Naive thymus-derived CD4-positive, alpha-beta T cell (primary cell): ENCODE measurements at regions of chr16 and their contacts with region 1.

Region 1: DNA sequence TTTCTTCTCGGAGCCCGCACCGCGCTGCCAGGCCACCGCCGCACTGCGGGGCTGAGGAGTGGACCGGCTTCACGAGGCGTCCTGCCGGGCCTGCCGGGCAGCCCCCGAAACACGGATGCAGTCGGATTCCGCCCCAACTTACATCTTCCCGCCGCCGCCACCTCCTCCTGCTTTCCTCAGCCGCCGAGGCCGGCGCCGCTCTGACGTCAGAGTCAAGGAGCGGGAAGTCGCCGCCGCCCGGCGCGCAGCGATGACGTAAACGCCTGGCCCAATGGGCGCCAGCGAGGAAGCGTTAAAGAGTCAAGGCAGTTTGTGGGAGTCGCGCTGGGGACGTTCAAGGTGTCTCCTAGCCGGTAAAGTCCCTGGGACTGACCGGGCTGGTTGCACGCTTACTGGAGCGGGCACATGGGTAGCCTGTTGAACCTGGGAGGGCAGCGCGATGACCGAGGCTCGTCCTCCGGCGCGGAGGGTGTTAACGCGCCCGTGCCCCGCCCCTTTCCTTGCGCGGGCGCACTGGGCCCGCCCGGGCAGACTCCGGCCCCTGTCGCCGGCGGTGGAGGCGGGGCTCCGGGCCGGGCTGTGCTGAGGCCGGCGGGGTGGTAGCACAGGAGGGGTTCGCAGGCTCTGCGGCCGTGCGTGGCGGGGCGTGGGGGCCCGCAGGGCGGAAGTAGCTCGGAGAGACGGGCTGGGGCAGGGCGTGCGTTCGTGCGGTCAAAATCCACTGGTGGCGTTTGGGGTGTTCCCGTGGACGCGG is at the start of gene RNPS1:
- DNase-seq: peak; percentile 93 to 98 (median 96)
- ATAC-seq: peak; percentile 92
- H3K4me3 ChIP-seq: peak within 1 kb of the TSS; percentile 99
- H3K4me3 Mint-ChIP-seq: peak within 1 kb of the TSS; percentile 93 to 98 (median 95)
- H3K27ac ChIP-seq: peak within 1 kb of the TSS; percentile 91
- H3K27ac Mint-ChIP-seq: peak within 1 kb of the TSS; percentile 95 to 99 (median 98)
- H3K4me1 ChIP-seq: peaks cover 13 to 15% of the 10 kb centered on the region in 2 donors
- H3K4me1 Mint-ChIP-seq: peaks cover 15 to 42% (median 35%) of the 10 kb centered on the region in 7 donors
- H3K27me3 ChIP-seq: no peaks in the 10 kb centered on the region
- H3K27me3 Mint-ChIP-seq: peaks cover 0 to 2% (median 0%) of the 10 kb centered on the region in 5 donors
- total RNA-seq, gene RNPS1: 136 to 250 (median 220) TPM

Region 2: GRCh38 chr16:1208239-1208830 is 1059.8 kb before region 1 on chr16:
- CTCF ChIA-PET with region 1: no interaction called
- POLR2A ChIA-PET with region 1: no interaction called
- intact Hi-C with region 1: no loop called
- DNase-seq: peak in 5 of 9 donors; percentile 8 to 25 (median 14)
- ATAC-seq: peak; percentile 54
- H3K4me3 ChIP-seq: no peak overlapping the region
- H3K4me3 Mint-ChIP-seq: peak overlapping the region in 9 of 10 donors; percentile 47 to 76 (median 69)
- H3K27ac ChIP-seq: no peak overlapping the region
- H3K27ac Mint-ChIP-seq: peak overlapping the region in 8 of 9 donors; percentile 60 to 87 (median 74)
- H3K4me1 ChIP-seq: no peaks in the 10 kb centered on the region
- H3K4me1 Mint-ChIP-seq: peaks cover 0 to 5% (median 4%) of the 10 kb centered on the region in 7 donors
- H3K27me3 ChIP-seq: no peaks in the 10 kb centered on the region
- H3K27me3 Mint-ChIP-seq: no peaks in the 10 kb centered on the region

Region 3: GRCh38 chr16:2047330-2048115 is 220.6 kb before region 1 on chr16 and contains the starts of genes NTHL1 and TSC2:
- CTCF ChIA-PET with region 1: no interaction called
- POLR2A ChIA-PET with region 1: interaction called, 3 read pairs
- intact Hi-C with region 1: loop called in 1 of 2 experiments (anchors 5 kb)
- DNase-seq: peak; percentile 81 to 95 (median 87)
- ATAC-seq: peak; percentile 98
- H3K4me3 ChIP-seq: peak within 1 kb of the TSS; percentile 72
- H3K4me3 Mint-ChIP-seq: peak within 1 kb of the TSS; percentile 82 to 97 (median 93)
- H3K27ac ChIP-seq: peak within 1 kb of the TSS; percentile 82
- H3K27ac Mint-ChIP-seq: peak within 1 kb of the TSS in 8 of 9 donors; percentile 57 to 91 (median 82)
- H3K4me1 ChIP-seq: peaks cover 6 to 12% of the 10 kb centered on the region in 2 donors
- H3K4me1 Mint-ChIP-seq: peaks cover 16 to 23% (median 19%) of the 10 kb centered on the region in 7 donors
- H3K27me3 ChIP-seq: no peaks in the 10 kb centered on the region
- H3K27me3 Mint-ChIP-seq: no peaks in the 10 kb centered on the region
- total RNA-seq, gene NTHL1: 4.4 to 27.0 (median 7.5) TPM
- total RNA-seq, gene TSC2: 126 to 155 (median 147) TPM

Region 4: DNA sequence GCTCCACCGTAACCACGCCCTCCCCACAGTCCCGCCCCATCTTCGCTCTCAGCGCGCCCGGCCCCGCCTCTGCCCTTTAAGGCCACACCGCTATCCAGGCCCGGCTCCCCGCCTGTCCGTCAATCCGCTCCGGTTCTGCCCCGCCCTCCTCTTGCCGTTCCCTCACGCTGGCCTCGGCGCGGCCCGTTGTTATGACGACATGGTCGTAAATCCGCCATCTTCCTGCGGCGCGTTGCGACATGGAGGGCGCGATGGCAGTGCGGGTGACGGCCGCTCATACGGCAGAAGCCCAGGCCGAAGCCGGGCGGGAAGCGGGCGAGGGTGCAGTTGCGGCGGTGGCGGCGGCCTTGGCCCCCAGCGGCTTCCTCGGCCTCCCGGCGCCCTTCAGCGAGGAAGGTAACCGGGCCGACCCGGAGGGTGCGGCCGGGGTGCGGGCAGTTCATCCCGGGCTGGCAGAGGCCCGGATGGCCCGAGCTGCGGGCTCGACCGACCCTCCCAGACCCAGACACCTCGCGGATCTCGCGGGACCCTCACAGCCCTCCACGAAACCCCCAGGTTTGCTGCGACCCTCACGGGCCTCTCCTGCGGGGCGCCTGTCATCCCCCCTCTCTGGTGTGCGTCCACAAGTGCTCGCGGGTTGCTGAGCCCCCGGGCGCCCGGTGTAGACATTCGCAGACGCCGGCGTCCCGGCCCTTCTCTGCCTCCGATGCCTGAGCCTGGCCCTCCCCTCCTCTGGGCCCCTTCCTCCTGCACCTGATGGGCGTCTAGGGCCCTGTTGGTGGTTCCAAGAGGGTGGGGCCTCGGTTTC is 44.5 kb before region 1 on chr16 and contains the start of gene E4F1:
- CTCF ChIA-PET with region 1: no interaction called
- POLR2A ChIA-PET with region 1: no interaction called
- intact Hi-C with region 1: loop called (anchors 1 kb)
- DNase-seq: peak; percentile 91 to 99 (median 97)
- ATAC-seq: peak; percentile 99
- H3K4me3 ChIP-seq: peak within 1 kb of the TSS; percentile 81
- H3K4me3 Mint-ChIP-seq: peak within 1 kb of the TSS; percentile 79 to 91 (median 88)
- H3K27ac ChIP-seq: peak within 1 kb of the TSS; percentile 81
- H3K27ac Mint-ChIP-seq: peak within 1 kb of the TSS; percentile 45 to 92 (median 86)
- H3K4me1 ChIP-seq: peaks cover 7 to 9% of the 10 kb centered on the region in 2 donors
- H3K4me1 Mint-ChIP-seq: peaks cover 0 to 25% (median 19%) of the 10 kb centered on the region in 7 donors
- H3K27me3 ChIP-seq: no peaks in the 10 kb centered on the region
- H3K27me3 Mint-ChIP-seq: peaks cover 0 to 3% (median 0%) of the 10 kb centered on the region in 5 donors
- total RNA-seq, gene E4F1: 31.3 to 45.6 (median 36.8) TPM

Region 5: GRCh38 chr16:2429034-2429770 is 161.1 kb after region 1 on chr16 and contains the start of gene CCNF:
- CTCF ChIA-PET with region 1: no interaction called
- POLR2A ChIA-PET with region 1: no interaction called
- intact Hi-C with region 1: loop called (anchors 1 to 5 kb)
- DNase-seq: peak; percentile 87 to 98 (median 92)
- ATAC-seq: peak; percentile 99
- H3K4me3 ChIP-seq: peak within 1 kb of the TSS; percentile 83
- H3K4me3 Mint-ChIP-seq: peak within 1 kb of the TSS; percentile 81 to 97 (median 88)
- H3K27ac ChIP-seq: peak within 1 kb of the TSS; percentile 68
- H3K27ac Mint-ChIP-seq: peak within 1 kb of the TSS; percentile 11 to 88 (median 71)
- H3K4me1 ChIP-seq: peaks cover 5 to 10% of the 10 kb centered on the region in 2 donors
- H3K4me1 Mint-ChIP-seq: peaks cover 12 to 38% (median 19%) of the 10 kb centered on the region in 7 donors
- H3K27me3 ChIP-seq: no peaks in the 10 kb centered on the region
- H3K27me3 Mint-ChIP-seq: no peaks in the 10 kb centered on the region
- total RNA-seq, gene CCNF: 2.6 to 50.1 (median 3.4) TPM

Region 6: GRCh38 chr16:2500918-2501750 is 233.0 kb after region 1 on chr16:
- CTCF ChIA-PET with region 1: no interaction called
- POLR2A ChIA-PET with region 1: no interaction called
- intact Hi-C with region 1: loop called in 1 of 2 experiments (anchors 1 kb)
- DNase-seq: peak; percentile 64 to 85 (median 74)
- ATAC-seq: peak; percentile 97
- H3K4me3 ChIP-seq: no peak overlapping the region
- H3K4me3 Mint-ChIP-seq: no peak overlapping the region
- H3K27ac ChIP-seq: no peak overlapping the region
- H3K27ac Mint-ChIP-seq: no peak overlapping the region
- H3K4me1 ChIP-seq: no peaks in the 10 kb centered on the region
- H3K4me1 Mint-ChIP-seq: peaks cover 0 to 3% (median 0%) of the 10 kb centered on the region in 7 donors
- H3K27me3 ChIP-seq: no peaks in the 10 kb centered on the region
- H3K27me3 Mint-ChIP-seq: no peaks in the 10 kb centered on the region

Region 7: GRCh38 chr16:2777231-2777902 is 509.3 kb after region 1 on chr16 and contains the start of gene ELOB:
- CTCF ChIA-PET with region 1: no interaction called
- POLR2A ChIA-PET with region 1: no interaction called
- intact Hi-C with region 1: loop called in 1 of 2 experiments (anchors 10 kb)
- DNase-seq: peak; percentile 81 to 95 (median 90)
- ATAC-seq: peak; percentile 95
- H3K4me3 ChIP-seq: peak within 1 kb of the TSS; percentile 93
- H3K4me3 Mint-ChIP-seq: peak within 1 kb of the TSS; percentile 93 to 97 (median 96)
- H3K27ac ChIP-seq: peak within 1 kb of the TSS; percentile 99
- H3K27ac Mint-ChIP-seq: peak within 1 kb of the TSS; percentile 96 to 99 (median 98)
- H3K4me1 ChIP-seq: peaks cover 19 to 24% of the 10 kb centered on the region in 2 donors
- H3K4me1 Mint-ChIP-seq: peaks cover 20 to 55% (median 38%) of the 10 kb centered on the region in 7 donors
- H3K27me3 ChIP-seq: no peaks in the 10 kb centered on the region
- H3K27me3 Mint-ChIP-seq: no peaks in the 10 kb centered on the region
- total RNA-seq, gene ELOB: 65.3 to 242 (median 99.3) TPM